Posterior vena cava (tissue), 2 donors: ENCODE measurements at regions of chr3 and their contacts with region 1.

Region 1: DNA sequence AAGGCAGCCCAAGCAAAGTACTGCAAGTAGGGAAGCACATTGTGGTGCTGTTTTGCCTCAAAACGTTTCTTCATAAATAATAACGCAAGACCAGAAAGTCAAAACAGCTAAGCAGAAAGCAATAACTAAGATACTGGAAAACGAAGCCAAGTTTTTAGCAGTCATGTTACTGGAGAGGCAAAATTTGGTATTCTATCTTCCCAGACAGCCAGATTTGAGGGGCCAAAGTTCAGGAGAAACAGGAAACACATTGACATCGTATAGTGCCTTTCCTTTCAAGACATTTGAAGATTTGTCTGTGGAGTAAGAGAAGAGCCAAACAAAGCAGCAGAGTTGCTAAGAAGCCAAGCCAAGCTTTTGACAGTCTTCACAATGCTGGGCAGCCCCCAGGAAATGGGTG is 843.6 kb upstream of the NECTIN3 start:
- DNase-seq: no peak

Region 2: DNA sequence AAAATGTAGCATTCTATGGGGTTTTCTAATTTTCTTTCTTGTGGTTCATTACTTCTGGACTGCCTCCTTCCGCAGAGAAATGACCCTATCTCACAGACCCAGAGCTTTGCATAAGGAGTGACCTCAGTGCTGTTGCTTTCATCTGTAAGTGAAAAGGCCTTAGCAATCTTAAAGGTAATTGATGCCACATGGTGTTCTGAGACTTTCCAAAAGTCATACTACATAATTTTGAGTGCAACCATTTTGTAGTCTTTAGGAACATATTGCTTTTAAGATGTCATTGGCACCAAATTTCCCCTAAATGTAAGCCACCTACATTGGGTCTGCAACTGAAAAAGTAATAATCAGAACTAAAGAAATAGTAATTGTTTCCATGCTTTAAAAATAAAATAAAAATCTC is 1940.8 kb before region 1 on chr3:
- intact Hi-C with region 1: no loop called
- DNase-seq: no peak

Region 3: DNA sequence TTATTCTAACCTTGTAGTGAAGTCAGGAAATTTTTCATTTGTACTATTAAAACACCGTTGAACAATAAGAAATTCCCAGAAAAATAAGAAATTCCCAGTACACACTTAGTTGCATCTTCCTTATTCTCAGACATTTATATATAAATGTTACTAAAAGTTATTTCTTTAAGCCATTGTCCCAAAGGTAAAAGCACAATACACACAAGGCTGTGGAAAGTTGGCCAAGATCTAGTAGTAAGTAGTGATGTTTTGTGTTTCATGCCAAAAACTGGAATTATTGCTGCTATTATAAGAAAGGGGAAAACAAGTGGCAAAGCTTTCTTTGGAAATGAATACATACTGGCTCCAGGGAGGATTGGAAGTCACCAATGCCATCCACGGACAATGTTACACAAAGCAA is 88.2 kb before region 1 on chr3:
- intact Hi-C with region 1: no loop called
- DNase-seq: no peak

Region 4: GRCh38 chr3:110459021-110459420 is 231.0 kb after region 1 on chr3:
- intact Hi-C with region 1: loop called in 1 of 2 experiments (anchors 5 kb)
- DNase-seq: no peak